ENCODE measurements at regions of chr20 and their contacts with region 1.

Region 1: DNA sequence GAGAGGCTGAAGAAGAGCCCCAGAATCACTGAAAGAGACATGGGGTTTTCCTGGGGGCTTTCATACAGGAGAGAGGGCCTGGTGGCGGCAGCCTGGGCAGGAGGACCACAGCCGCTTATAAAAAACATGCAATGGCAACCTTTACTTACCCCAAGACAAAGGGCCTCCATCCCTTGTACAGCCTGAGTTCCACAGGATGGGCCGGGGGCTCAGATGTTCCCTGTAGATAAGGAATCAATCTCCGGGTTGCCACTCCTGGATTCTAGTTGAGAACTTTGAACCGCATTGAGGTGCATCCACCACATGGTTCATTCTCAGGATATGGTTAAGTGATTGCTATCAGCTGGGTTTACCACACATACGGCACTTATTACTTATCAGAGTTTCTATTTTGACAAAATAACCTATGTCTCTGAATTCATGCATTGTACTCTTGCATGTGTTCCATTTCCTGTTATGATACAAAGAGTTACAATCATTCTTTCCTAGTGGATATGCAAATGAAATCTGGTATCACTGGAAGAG is 677.6 kb downstream of the KIF16B start:
- DNase-seq: no peak
- H3K4me3 ChIP-seq: no peak overlapping the region
- H3K27ac ChIP-seq: no peak overlapping the region
- H3K4me1 ChIP-seq: peaks cover 6% of the 10 kb centered on the region
- CTCF ChIP-seq: no peak

Region 2: DNA sequence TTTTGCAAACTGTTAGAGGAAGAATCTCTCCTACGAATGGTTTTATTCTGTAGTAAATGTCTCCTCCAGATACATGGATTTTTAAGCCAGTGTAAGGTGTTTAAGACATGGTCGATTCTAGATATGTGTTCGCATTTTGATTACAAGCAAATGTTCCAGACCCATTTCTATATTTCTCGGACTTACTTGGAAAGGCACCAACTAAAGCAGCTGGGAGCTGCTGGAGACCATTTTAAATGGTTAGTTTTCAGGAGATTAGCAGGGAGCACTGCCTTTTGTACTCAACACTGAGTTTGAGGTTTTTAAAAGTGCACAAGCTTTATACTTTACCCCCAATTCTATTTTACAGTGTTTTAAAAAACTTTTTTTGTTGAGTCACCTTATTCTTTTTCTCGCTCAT is 179.4 kb before region 1 on chr20:
- CTCF ChIA-PET with region 1: no interaction called
- POLR2A ChIA-PET with region 1: no interaction called
- intact Hi-C with region 1: loop called (anchors 10 kb)
- DNase-seq: no peak
- H3K4me3 ChIP-seq: no peak overlapping the region
- H3K27ac ChIP-seq: no peak overlapping the region
- H3K4me1 ChIP-seq: no peaks in the 10 kb centered on the region
- CTCF ChIP-seq: no peak

Measured in OCI-LY7 (cell line).